ENCODE measurements at regions of chr9 and their contacts with region 1.

Region 1: GRCh38 chr9:14441976-14442651 is 128.2 kb upstream of the NFIB start:
- DNase-seq: peak; percentile 65
- ATAC-seq: peak; percentile 99
- H3K4me3 Mint-ChIP-seq: no peak overlapping the region
- H3K27ac Mint-ChIP-seq: no peak overlapping the region
- H3K4me1 Mint-ChIP-seq: peaks cover 10% of the 10 kb centered on the region
- H3K27me3 Mint-ChIP-seq: no peaks in the 10 kb centered on the region
- CTCF ChIP-seq: peak; percentile 40

Region 2: GRCh38 chr9:14652729-14653377 is 210.7 kb after region 1 on chr9:
- CTCF ChIA-PET with region 1: interaction called, 25 read pairs
- POLR2A ChIA-PET with region 1: no interaction called
- DNase-seq: no peak
- ATAC-seq: peak; percentile 83
- H3K4me3 Mint-ChIP-seq: no peak overlapping the region
- H3K27ac Mint-ChIP-seq: no peak overlapping the region
- H3K4me1 Mint-ChIP-seq: peaks cover 5% of the 10 kb centered on the region; the same call in 1 of the 2 replicates
- H3K27me3 Mint-ChIP-seq: no peaks in the 10 kb centered on the region
- CTCF ChIP-seq: no peak

Region 3: GRCh38 chr9:14661421-14662059 is 219.4 kb after region 1 on chr9:
- CTCF ChIA-PET with region 1: interaction called, 12 read pairs
- POLR2A ChIA-PET with region 1: no interaction called
- DNase-seq: no peak
- ATAC-seq: no peak
- H3K4me3 Mint-ChIP-seq: no peak overlapping the region
- H3K27ac Mint-ChIP-seq: no peak overlapping the region
- H3K4me1 Mint-ChIP-seq: peaks cover 3% of the 10 kb centered on the region; the same call in 1 of the 2 replicates
- H3K27me3 Mint-ChIP-seq: no peaks in the 10 kb centered on the region
- CTCF ChIP-seq: peak; percentile 23; the same call in 1 of the 2 replicates

Region 4: DNA sequence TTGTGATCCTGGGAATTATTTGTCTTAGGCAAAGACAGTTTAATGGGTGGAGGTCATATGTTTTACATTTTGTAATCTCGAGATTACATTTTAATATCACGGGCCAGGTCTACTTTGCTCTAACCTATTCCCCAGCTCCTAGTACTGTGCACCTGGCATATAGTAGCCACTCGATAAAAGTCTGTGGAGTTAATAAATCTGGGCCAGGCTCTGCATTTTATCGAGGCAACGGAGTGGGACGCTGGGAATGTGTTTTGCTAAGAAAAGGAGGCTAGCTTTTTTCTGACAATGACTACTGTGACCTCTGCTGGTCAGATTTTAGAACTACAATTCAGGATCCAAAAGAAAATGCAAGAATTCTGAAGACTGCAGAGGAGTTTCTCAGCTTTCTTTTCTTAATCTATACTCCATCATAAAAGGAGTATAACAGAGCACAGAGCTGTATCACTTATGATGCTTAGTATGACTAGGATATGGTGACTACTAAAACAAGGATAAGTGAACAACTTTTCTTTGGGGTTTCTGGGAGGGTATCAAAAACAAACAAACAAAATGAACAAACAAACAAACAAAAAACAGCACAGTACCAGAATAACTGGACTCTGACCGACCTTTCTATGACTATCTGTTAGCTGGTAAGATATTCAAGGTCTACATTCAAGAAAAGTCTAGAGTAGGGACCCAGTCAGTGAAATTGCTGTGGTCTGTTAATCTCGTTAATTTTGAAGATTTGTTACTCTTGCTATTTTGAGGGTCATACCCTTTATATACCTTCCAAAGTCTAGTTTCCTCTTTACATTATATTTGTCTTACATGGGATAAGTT is 326.5 kb after region 1 on chr9:
- CTCF ChIA-PET with region 1: interaction called, 25 read pairs
- POLR2A ChIA-PET with region 1: no interaction called
- DNase-seq: peak; percentile 18
- ATAC-seq: peak; percentile 55; the same call in 1 of the 2 replicates
- H3K4me3 Mint-ChIP-seq: no peak overlapping the region; the same call in 1 of the 2 replicates
- H3K27ac Mint-ChIP-seq: no peak overlapping the region
- H3K4me1 Mint-ChIP-seq: peaks cover 6% of the 10 kb centered on the region
- H3K27me3 Mint-ChIP-seq: no peaks in the 10 kb centered on the region
- CTCF ChIP-seq: peak; percentile 65